B cell (primary cell): ENCODE measurements at regions of chr6 and their contacts with region 1.

Region 1: GRCh38 chr6:121305957-121306607 is 28.2 kb downstream of the TBC1D32 start:
- DNase-seq: peak; percentile 39
- ATAC-seq: no peak
- H3K4me3 ChIP-seq: no peak overlapping the region
- H3K4me3 Mint-ChIP-seq: no peak overlapping the region
- H3K27ac ChIP-seq: no peak overlapping the region
- H3K27ac Mint-ChIP-seq: no peak overlapping the region
- H3K4me1 ChIP-seq: no peaks in the 10 kb centered on the region
- H3K4me1 Mint-ChIP-seq: no peaks in the 10 kb centered on the region
- H3K27me3 ChIP-seq: no peaks in the 10 kb centered on the region
- H3K27me3 Mint-ChIP-seq: no peaks in the 10 kb centered on the region
- CTCF ChIP-seq: peak; percentile 79

Region 2: DNA sequence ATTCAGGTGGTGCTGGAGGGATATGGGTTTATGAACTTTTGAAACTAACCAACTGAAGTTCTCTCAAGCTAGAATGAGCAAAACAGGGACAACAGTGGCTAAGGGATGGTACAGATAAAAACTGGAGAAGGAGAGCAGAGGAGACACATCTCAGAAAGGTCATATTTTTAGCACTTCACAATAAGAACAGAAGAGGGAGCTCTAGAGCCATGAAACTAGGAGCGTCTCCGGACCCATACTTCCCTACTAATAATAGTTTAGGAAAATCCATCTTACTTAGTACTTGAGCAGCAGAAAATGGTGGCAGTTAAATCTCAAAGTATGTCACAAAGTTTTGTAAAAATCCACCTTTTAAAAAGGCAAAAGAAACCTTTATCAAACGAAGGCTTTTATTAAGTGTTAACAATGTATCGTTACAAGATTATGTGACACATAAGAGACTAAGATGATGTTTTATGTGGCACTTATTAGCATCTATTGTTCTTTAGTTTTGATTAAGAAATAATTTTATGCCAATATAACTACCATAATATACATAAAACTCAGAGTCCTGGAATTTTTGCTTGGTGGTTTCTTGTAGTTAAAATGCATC is 250.4 kb before region 1 on chr6:
- CTCF ChIA-PET with region 1: interaction called, 17 read pairs
- POLR2A ChIA-PET with region 1: no interaction called
- intact Hi-C with region 1: loop called (anchors 1 kb)
- DNase-seq: peak; percentile 48
- ATAC-seq: peak; percentile 33
- H3K4me3 ChIP-seq: no peak overlapping the region
- H3K4me3 Mint-ChIP-seq: no peak overlapping the region
- H3K27ac ChIP-seq: no peak overlapping the region
- H3K27ac Mint-ChIP-seq: no peak overlapping the region
- H3K4me1 ChIP-seq: no peaks in the 10 kb centered on the region
- H3K4me1 Mint-ChIP-seq: peaks cover 4% of the 10 kb centered on the region
- H3K27me3 ChIP-seq: no peaks in the 10 kb centered on the region
- H3K27me3 Mint-ChIP-seq: no peaks in the 10 kb centered on the region
- CTCF ChIP-seq: peak; percentile 85

Region 3: GRCh38 chr6:121285041-121285440 is 21.0 kb before region 1 on chr6:
- CTCF ChIA-PET with region 1: no interaction called
- POLR2A ChIA-PET with region 1: no interaction called
- intact Hi-C with region 1: no loop called
- DNase-seq: no peak
- ATAC-seq: no peak
- H3K4me3 ChIP-seq: no peak overlapping the region
- H3K4me3 Mint-ChIP-seq: no peak overlapping the region
- H3K27ac ChIP-seq: no peak overlapping the region
- H3K27ac Mint-ChIP-seq: no peak overlapping the region
- H3K4me1 ChIP-seq: no peaks in the 10 kb centered on the region
- H3K4me1 Mint-ChIP-seq: peaks cover 4% of the 10 kb centered on the region
- H3K27me3 ChIP-seq: no peaks in the 10 kb centered on the region
- H3K27me3 Mint-ChIP-seq: no peaks in the 10 kb centered on the region
- CTCF ChIP-seq: no peak

Region 4: GRCh38 chr6:121426686-121427085 is 120.6 kb after region 1 on chr6:
- CTCF ChIA-PET with region 1: no interaction called
- POLR2A ChIA-PET with region 1: no interaction called
- intact Hi-C with region 1: no loop called
- DNase-seq: no peak
- ATAC-seq: no peak
- H3K4me3 ChIP-seq: no peak overlapping the region
- H3K4me3 Mint-ChIP-seq: no peak overlapping the region
- H3K27ac ChIP-seq: no peak overlapping the region
- H3K27ac Mint-ChIP-seq: no peak overlapping the region
- H3K4me1 ChIP-seq: no peaks in the 10 kb centered on the region
- H3K4me1 Mint-ChIP-seq: no peaks in the 10 kb centered on the region
- H3K27me3 ChIP-seq: no peaks in the 10 kb centered on the region
- H3K27me3 Mint-ChIP-seq: no peaks in the 10 kb centered on the region
- CTCF ChIP-seq: no peak